ENCODE measurements at regions of chr6 and their contacts with region 1.

Region 1: GRCh38 chr6:159880412-159880975 is 10.3 kb upstream of the MAS1 start:
- DNase-seq: no peak
- H3K4me3 ChIP-seq: no peak overlapping the region
- H3K27ac ChIP-seq: no peak overlapping the region
- H3K4me1 ChIP-seq: peaks cover 3% of the 10 kb centered on the region in 2 donors
- H3K27me3 ChIP-seq: no peaks in the 10 kb centered on the region
- CTCF ChIP-seq: no peak

Region 2: DNA sequence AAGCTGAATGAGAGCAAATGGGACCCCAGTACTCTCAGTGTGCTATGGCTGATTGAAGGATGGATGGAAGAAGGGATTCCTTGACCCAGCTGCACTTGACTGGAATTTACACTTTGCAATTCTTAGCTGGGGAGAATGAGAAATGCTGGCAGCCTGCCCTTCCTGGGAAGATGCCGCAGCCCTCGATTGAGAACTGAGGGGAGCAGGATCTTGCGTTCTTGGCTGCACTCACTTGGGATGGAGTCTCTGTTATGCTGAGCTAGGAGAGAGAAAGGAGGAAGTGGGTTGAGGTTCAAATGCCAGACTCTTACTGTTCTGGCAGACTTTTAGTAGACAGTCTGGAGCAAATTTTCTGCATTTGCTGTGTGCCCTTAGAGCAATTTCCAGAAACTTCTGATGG is 490.1 kb before region 1 on chr6:
- intact Hi-C with region 1: no loop called
- DNase-seq: no peak
- H3K4me3 ChIP-seq: no peak overlapping the region
- H3K27ac ChIP-seq: no peak overlapping the region
- H3K4me1 ChIP-seq: peaks cover 3 to 10% of the 10 kb centered on the region in 2 donors
- H3K27me3 ChIP-seq: no peaks in the 10 kb centered on the region
- CTCF ChIP-seq: no peak

Region 3: DNA sequence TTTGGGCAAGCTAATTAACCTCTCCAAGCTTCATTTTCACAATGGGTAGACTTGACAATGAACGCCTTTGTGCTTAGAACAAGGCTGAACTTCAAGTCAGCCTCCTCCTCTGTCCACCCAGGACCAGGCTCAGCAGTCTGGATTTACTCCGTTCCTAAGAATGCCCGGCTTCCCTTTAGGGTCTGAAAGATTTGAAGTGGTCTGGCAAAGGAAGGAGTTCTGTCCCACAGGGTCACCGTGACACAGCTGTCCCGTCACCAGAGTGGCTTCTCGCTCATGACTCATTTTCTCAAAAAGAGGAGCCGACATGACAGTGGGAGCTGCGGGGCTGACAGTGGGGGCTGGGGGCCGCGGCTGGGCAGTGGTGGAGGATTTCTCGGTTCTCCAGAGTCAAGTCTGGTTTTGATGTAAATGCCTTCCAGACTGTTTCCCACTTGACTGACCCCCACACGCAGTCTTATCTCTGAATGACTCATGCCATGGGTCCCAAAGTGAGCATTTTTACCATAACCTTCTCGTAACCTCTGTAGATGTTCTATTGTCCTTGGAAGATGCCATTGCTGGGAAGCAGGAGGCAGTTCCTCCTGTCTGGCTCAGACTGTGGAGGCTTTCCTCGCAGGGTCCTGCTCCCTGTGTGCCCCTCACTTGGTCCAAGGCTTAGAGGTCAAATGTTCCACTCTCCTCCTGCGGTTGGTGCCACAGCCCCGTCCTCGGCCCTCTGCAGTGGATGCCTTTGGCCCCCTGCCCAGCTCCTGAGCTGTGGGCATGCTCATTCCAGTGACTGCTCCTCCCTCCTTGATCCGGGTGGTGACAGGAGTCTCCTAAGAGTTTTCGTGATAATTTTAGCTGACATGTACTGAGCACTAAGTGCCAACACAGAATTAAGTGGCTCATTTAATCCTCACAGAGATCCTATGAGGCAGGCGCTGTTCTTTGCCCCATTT is 458.2 kb before region 1 on chr6:
- intact Hi-C with region 1: no loop called
- DNase-seq: no peak
- H3K4me3 ChIP-seq: peak overlapping the region in 1 of 2 donors; percentile 25
- H3K27ac ChIP-seq: peak overlapping the region; percentile 26 to 65
- H3K4me1 ChIP-seq: peaks cover 0 to 2% of the 10 kb centered on the region in 2 donors
- H3K27me3 ChIP-seq: no peaks in the 10 kb centered on the region
- CTCF ChIP-seq: no peak

Region 4: DNA sequence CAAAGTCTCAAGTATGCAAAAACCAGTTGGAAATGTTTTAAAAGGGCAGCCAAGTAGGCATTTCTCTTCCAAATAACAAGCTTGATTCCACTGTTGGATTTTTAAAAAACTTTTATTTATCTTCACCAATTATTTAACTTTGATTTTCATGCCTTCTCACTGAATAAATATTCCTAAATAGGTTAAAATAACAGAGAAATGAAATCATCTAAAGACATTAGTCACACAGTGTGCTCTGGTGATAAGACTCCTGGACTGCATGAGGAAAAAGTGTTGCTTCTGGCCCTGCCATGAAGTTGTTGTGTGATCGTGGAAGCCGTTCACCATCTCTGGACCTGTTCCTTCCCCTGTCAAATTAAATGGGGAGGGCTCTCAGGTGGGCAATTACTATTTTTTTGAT is 54.6 kb after region 1 on chr6:
- intact Hi-C with region 1: loop called (anchors 5 kb)
- DNase-seq: no peak
- H3K4me3 ChIP-seq: no peak overlapping the region
- H3K27ac ChIP-seq: peak overlapping the region; percentile 55 to 66
- H3K4me1 ChIP-seq: peaks cover 12 to 45% of the 10 kb centered on the region in 2 donors
- H3K27me3 ChIP-seq: no peaks in the 10 kb centered on the region
- CTCF ChIP-seq: no peak

Region 5: DNA sequence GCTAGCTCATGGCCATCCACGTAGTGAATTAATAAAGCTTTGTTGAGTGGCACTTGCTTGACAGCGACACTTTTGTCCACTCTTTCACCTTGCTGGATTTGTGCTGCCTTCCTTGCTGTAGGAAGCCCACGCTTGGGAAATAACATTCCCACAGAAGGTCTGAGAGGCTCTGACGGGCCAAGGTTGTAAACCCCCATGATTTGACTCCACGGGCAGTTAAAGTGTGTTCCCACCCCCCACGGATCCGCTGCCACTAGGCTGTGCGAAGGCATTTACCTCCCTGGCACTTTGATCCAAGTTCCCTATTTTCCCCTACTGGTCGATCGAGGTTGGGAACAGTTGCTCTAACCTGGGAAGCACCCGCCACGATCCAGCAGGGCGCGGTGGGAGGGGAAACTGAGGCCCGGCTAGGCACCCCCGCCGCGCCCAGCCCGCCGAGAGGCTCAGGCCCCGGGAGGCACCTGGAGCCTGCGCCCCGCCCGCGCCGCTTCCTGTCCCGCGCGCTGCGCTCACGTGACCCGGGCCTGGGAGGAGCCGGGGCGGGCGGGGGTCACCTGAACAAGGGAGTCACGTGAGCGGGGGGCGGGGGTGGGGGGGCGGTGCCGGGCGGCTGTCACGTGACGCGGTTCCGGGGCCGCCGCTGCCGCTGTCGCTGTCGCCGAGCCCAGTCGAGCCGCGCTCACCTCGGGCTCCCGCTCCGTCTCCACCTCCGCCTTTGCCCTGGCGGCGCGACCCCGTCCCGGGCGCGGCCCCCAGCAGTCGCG is 88.1 kb after region 1 on chr6 and contains the start of gene IGF2R:
- intact Hi-C with region 1: no loop called
- DNase-seq: peak; percentile 89 to 97
- H3K4me3 ChIP-seq: peak within 1 kb of the TSS; percentile 100
- H3K27ac ChIP-seq: peak within 1 kb of the TSS; percentile 86 to 90
- H3K4me1 ChIP-seq: peaks cover 0 to 15% of the 10 kb centered on the region in 2 donors
- H3K27me3 ChIP-seq: no peaks in the 10 kb centered on the region
- CTCF ChIP-seq: no peak
- total RNA-seq, gene IGF2R: 104 TPM

Measured in ascending aorta (tissue), 2 donors.